ENCODE measurements at regions of chr1 and their contacts with region 1.

Region 1: DNA sequence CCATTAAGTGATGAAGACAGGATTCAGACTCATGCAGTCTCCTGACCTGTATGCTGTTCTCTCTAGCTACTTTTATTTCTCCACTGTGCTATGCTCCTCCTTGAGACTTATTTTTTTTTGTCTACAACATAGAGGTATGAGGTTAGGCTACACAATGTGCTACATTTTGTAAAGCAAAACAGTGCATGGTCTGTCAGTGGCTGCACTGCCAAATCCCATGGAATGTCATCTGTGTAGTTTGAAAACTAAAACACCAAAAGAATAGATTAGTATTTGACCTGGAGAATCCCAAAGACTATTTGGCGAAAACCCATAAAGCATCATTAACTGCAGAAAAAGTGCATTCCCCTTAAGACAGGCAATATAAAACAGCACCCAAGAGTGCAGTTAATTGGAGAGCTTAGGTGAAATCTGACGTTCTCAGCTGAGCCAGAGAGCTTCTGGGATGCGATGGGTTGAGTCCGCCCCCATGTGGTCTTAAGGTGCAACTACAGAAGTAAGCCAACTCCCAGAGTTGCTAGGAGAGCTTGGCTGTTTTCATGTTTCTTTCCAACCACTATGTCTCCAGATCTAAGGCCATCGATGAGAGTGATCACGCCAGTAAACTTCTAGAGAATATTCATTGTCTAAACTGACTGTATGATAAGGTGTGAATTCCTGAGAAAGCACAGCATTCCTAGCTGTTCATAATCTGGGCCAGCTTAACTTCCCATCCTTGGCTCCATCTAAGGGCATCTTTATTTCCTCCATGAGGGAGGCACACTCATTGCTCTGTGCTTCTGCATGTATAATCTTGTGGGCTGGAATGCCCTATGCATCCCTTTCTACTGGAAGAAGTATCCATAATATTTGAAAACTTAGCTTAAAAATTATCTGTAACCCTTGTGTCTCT is 20.7 kb upstream of the CYP2J2 start:
- DNase-seq: peak; percentile 71
- ATAC-seq: peak; percentile 86
- H3K4me3 Mint-ChIP-seq: no peak overlapping the region
- H3K27ac Mint-ChIP-seq: no peak overlapping the region
- H3K4me1 Mint-ChIP-seq: no peaks in the 10 kb centered on the region
- H3K27me3 Mint-ChIP-seq: peaks cover 6% of the 10 kb centered on the region

Region 2: DNA sequence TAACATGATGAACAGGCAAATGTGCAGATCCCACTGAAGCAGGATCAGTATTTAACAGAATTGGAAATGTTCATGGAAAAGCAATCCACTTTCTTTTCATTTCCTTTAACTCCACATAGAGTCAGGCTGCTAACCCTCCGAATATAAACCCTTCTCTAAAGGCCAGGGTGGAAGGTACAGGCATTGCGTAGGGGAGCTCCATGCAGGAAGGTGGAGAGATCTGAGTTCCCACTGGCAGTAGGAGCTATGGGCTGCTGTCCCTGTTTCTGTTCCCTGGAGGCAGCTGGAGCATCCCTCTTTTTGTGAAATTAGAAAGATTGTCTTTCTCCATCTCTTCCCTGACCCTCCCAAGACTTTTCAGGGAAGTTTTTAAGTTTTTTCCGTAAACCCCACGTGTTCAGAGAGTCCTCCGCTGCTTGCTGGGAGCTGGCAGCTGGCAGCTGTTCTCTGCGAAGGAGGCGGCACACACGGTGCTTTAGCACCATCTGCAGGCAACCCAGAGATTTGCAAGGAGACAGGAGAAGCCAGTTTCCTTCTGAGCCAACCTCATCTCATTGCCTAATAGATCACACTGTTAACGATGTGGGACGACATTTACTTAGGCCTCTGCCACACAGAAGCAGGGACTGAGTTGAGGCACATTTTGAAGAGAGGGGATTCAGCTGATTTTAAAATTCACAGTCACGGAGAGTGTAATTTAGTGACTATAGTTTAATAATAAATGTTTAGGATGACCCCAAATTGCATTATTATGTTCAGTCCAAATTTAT is 188.0 kb before region 1 on chr1:
- CTCF ChIA-PET with region 1: interaction called, 10 read pairs
- POLR2A ChIA-PET with region 1: no interaction called
- DNase-seq: peak; percentile 78
- ATAC-seq: peak; percentile 85
- H3K4me3 Mint-ChIP-seq: no peak overlapping the region
- H3K27ac Mint-ChIP-seq: no peak overlapping the region
- H3K4me1 Mint-ChIP-seq: peaks cover 4% of the 10 kb centered on the region
- H3K27me3 Mint-ChIP-seq: no peaks in the 10 kb centered on the region

Region 3: GRCh38 chr1:59866462-59866861 is 80.8 kb before region 1 on chr1:
- CTCF ChIA-PET with region 1: interaction called, 13 read pairs
- POLR2A ChIA-PET with region 1: no interaction called
- DNase-seq: no peak
- ATAC-seq: no peak
- H3K4me3 Mint-ChIP-seq: no peak overlapping the region
- H3K27ac Mint-ChIP-seq: no peak overlapping the region
- H3K4me1 Mint-ChIP-seq: no peaks in the 10 kb centered on the region
- H3K27me3 Mint-ChIP-seq: no peaks in the 10 kb centered on the region

Region 4: DNA sequence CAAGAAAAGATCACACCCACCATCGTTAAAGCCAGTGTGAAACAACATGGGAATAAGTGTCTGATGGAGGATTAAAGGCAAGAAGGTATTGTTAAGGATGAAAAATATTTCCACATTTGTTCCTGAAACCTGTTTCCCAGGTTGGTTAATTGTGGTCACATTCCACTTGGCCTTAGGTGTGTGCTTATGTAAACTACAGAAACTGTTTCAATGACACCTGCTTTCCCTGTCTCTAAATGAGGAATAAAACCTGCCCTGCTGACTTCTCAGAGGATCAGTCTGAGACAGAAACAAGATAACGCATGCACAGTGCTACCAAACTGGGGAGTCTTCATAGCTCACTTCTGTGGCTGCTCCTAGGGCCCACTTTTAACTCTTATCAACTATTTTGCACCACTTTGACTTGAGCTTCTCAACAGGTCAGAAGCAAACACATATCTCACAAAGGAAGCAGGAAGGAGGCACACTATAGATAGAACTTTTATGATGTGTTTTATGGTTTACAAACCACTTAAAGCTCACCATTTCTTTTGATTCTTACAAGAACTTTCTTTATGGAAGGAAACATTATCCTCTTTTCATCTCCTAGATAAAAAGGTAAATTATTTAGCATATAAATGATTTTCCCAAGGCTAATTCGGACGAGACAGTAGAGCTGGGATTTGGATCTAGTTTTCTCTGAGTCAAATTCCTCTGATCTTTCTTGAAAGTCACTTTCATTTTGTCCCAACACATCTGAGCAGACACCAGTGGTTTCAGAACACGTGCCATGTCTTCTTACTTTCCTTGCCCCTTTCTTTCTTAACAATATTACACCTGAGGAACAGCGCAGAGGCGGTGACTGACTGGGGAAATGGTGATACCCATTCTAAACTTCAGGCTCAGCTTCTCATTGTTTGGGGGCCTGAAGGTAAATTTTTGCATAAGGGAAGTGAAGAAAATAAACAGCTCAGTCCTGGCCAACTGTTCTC is 54.2 kb before region 1 on chr1:
- CTCF ChIA-PET with region 1: interaction called, 26 read pairs
- POLR2A ChIA-PET with region 1: no interaction called
- DNase-seq: peak; percentile 21
- ATAC-seq: peak; percentile 33
- H3K4me3 Mint-ChIP-seq: peak overlapping the region; percentile 9
- H3K27ac Mint-ChIP-seq: peak overlapping the region; percentile 77
- H3K4me1 Mint-ChIP-seq: peaks cover 14% of the 10 kb centered on the region
- H3K27me3 Mint-ChIP-seq: no peaks in the 10 kb centered on the region

Region 5: DNA sequence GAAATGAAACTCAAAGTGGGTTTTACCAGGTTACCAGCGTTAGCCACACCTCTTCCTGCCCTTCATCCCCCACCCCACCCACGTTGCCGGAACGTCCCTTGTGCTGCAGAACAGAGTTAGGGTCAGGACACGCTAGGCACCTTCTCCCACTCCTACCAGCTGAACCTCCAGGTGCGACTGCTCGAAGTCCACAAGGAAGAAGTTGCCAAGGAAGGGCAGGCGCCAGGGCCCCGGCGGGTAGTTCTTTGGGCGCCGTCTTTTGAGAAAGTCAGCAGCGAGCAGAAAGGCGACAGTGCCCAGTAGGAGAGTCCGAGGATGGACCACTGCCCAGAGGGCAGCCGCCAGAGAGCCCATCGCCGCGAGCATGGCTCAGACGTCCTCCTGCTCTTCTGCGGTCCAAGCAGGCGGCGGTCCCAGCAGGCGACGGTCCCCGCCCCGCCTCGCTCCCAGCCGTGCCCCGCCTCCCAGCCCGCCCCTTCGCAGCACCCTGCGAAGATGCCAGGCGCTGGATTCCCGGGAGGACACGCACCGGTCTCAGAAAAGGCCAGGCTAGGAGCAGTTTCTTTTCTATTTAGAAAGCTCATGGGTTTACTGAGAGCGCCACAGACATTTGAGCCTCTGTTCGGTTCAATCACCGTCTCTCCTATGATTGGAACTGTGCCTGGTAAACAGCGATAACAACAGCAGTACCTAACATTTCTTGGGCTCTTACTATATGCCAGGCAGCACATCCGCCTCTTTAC is 20.7 kb before region 1 on chr1 and contains the start of gene CYP2J2:
- CTCF ChIA-PET with region 1: interaction called, 15 read pairs
- POLR2A ChIA-PET with region 1: no interaction called
- DNase-seq: peak; percentile 52
- ATAC-seq: peak; percentile 99
- H3K4me3 Mint-ChIP-seq: peak within 1 kb of the TSS; percentile 81
- H3K27ac Mint-ChIP-seq: peak within 1 kb of the TSS; percentile 74
- H3K4me1 Mint-ChIP-seq: peaks cover 19% of the 10 kb centered on the region
- H3K27me3 Mint-ChIP-seq: peaks cover 32% of the 10 kb centered on the region
- total RNA-seq, gene CYP2J2: 2.7 to 3.1 TPM